Stomach (tissue), 19 donors: ENCODE measurements at regions of chr12 and their contacts with region 1.

Region 1: DNA sequence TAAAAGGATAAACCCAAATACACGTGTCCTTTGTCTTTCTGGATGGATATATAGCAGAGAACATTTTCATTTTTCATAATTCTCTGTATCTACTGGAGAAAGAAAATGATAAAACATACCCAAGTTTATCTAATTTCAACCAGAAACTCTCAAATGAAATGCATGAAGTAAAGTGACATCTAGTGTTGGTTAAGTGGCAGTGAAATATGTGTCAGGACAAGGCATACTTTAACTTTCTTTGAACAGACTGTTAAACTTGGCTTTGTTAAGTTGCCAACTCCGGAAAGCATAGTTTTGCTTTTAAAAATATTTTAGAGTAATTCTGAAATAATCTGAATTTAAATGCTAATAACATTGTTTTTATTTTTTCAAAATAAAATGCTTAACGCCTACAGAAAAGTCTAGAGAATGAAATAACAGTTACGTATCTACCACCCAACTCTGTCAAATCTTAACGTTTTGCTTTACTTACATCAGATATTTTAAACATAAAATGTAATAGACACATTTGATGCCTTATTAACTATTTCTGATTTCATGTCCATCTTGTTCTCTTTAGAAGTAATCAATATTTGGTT is 25.2 kb upstream of the NTN4 start:
- DNase-seq: peak in 1 of 2 donors; percentile 47
- H3K4me3 ChIP-seq: no peak overlapping the region
- H3K27ac ChIP-seq: no peak overlapping the region
- H3K4me1 ChIP-seq: no peaks in the 10 kb centered on the region
- H3K27me3 ChIP-seq: no peaks in the 10 kb centered on the region
- CTCF ChIP-seq: peak in 5 of 7 experiments; percentile 49 to 86 (median 65)
- EP300 ChIP-seq: no peak
- POLR2A ChIP-seq: no peak

Region 2: GRCh38 chr12:95582230-95583058 is 233.3 kb before region 1 on chr12:
- intact Hi-C with region 1: loop called (anchors 5 kb)
- DNase-seq: peak in 1 of 2 donors; percentile 78
- H3K4me3 ChIP-seq: no peak overlapping the region
- H3K27ac ChIP-seq: no peak overlapping the region
- H3K4me1 ChIP-seq: peaks cover 0 to 4% (median 0%) of the 10 kb centered on the region in 4 donors
- H3K27me3 ChIP-seq: no peaks in the 10 kb centered on the region
- CTCF ChIP-seq: peak in 4 of 7 experiments; percentile 34 to 57 (median 52)
- EP300 ChIP-seq: no peak
- POLR2A ChIP-seq: no peak

Region 3: DNA sequence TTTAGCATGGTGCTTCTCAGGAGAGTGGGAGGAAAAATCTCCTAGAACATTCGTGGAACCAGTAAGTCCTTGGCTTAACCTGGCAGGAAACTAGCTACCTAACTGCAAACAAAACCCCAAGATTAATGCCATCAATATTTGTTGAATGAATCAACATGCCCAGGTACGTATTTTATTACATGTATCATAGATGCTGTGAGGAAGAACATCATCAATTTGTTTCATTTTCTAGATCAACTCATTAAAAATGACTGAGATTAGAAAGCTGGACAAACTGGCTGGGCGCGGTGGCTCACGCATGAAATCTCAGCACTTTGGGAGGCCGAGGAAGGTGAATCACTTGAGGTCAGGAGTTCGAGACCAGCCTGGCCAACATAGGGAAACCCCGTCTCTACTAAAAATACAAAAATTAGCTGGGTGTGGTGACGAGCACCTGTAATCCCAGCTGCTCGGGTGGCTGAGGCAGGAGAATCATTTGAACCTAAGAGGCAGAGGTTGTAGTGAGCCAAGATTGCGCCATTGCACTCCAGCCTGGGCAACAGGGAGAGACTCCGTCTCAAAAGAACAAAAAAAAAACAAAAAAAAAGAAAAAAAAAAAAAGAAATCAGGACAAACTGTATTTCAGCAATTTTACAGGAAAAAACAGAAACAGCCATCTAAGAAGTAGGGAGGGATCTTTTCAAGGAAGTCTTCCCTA is 113.9 kb before region 1 on chr12:
- intact Hi-C with region 1: no loop called
- DNase-seq: peak in 1 of 2 donors; percentile 49
- H3K4me3 ChIP-seq: no peak overlapping the region
- H3K27ac ChIP-seq: peak overlapping the region in 4 of 5 donors; percentile 35 to 75 (median 52)
- H3K4me1 ChIP-seq: peaks cover 0 to 24% (median 14%) of the 10 kb centered on the region in 4 donors
- H3K27me3 ChIP-seq: no peaks in the 10 kb centered on the region
- CTCF ChIP-seq: no peak
- EP300 ChIP-seq: no peak
- POLR2A ChIP-seq: no peak

Region 4: GRCh38 chr12:96035278-96036236 is 219.8 kb after region 1 on chr12 and contains the start of gene LTA4H:
- intact Hi-C with region 1: no loop called
- DNase-seq: peak; percentile 98 to 99
- H3K4me3 ChIP-seq: peak within 1 kb of the TSS; percentile 68 to 87 (median 83)
- H3K27ac ChIP-seq: peak within 1 kb of the TSS; percentile 84 to 92 (median 89)
- H3K4me1 ChIP-seq: peaks cover 0 to 34% (median 26%) of the 10 kb centered on the region in 4 donors
- H3K27me3 ChIP-seq: no peaks in the 10 kb centered on the region
- CTCF ChIP-seq: no peak
- EP300 ChIP-seq: no peak
- POLR2A ChIP-seq: peak in 2 of 4 donors; percentile 75 to 85
- total RNA-seq, gene LTA4H: 22.6 to 91.5 (median 73.6) TPM

Region 5: GRCh38 chr12:96416033-96416801 is 600.5 kb after region 1 on chr12:
- intact Hi-C with region 1: no loop called
- DNase-seq: peak in 1 of 2 donors; percentile 43
- H3K4me3 ChIP-seq: no peak overlapping the region
- H3K27ac ChIP-seq: no peak overlapping the region
- H3K4me1 ChIP-seq: peaks cover 0 to 9% (median 2%) of the 10 kb centered on the region in 4 donors
- H3K27me3 ChIP-seq: no peaks in the 10 kb centered on the region
- CTCF ChIP-seq: no peak
- EP300 ChIP-seq: no peak
- POLR2A ChIP-seq: no peak